Aorta (tissue), 5 donors: ENCODE measurements at regions of chr14 and their contacts with region 1.

Region 1: GRCh38 chr14:53295985-53296582 is 143.0 kb upstream of the DDHD1 start:
- DNase-seq: no peak
- ATAC-seq: no peak
- H3K4me3 ChIP-seq: no peak overlapping the region
- H3K27ac ChIP-seq: no peak overlapping the region
- H3K4me1 ChIP-seq: no peaks in the 10 kb centered on the region
- H3K27me3 ChIP-seq: no peaks in the 10 kb centered on the region

Region 2: GRCh38 chr14:52977798-52978197 is 318.3 kb before region 1 on chr14:
- intact Hi-C with region 1: loop called in 1 of 2 experiments (anchors 10 kb)
- DNase-seq: no peak
- ATAC-seq: no peak
- H3K4me3 ChIP-seq: no peak overlapping the region
- H3K27ac ChIP-seq: no peak overlapping the region
- H3K4me1 ChIP-seq: no peaks in the 10 kb centered on the region
- H3K27me3 ChIP-seq: no peaks in the 10 kb centered on the region

Region 3: GRCh38 chr14:53265025-53265424 is 31.1 kb before region 1 on chr14:
- intact Hi-C with region 1: no loop called
- DNase-seq: no peak
- ATAC-seq: no peak
- H3K4me3 ChIP-seq: no peak overlapping the region
- H3K27ac ChIP-seq: no peak overlapping the region
- H3K4me1 ChIP-seq: no peaks in the 10 kb centered on the region
- H3K27me3 ChIP-seq: no peaks in the 10 kb centered on the region

Region 4: GRCh38 chr14:53278930-53279506 is 17.1 kb before region 1 on chr14:
- intact Hi-C with region 1: no loop called
- DNase-seq: no peak
- ATAC-seq: no peak
- H3K4me3 ChIP-seq: no peak overlapping the region
- H3K27ac ChIP-seq: no peak overlapping the region
- H3K4me1 ChIP-seq: no peaks in the 10 kb centered on the region
- H3K27me3 ChIP-seq: no peaks in the 10 kb centered on the region

Region 5: GRCh38 chr14:53316499-53316898 is 20.4 kb after region 1 on chr14:
- intact Hi-C with region 1: no loop called
- DNase-seq: no peak
- ATAC-seq: peak; percentile 57
- H3K4me3 ChIP-seq: no peak overlapping the region
- H3K27ac ChIP-seq: no peak overlapping the region
- H3K4me1 ChIP-seq: no peaks in the 10 kb centered on the region
- H3K27me3 ChIP-seq: no peaks in the 10 kb centered on the region

Region 6: GRCh38 chr14:53391151-53391550 is 95.1 kb after region 1 on chr14:
- intact Hi-C with region 1: no loop called
- DNase-seq: no peak
- ATAC-seq: no peak
- H3K4me3 ChIP-seq: no peak overlapping the region
- H3K27ac ChIP-seq: no peak overlapping the region
- H3K4me1 ChIP-seq: no peaks in the 10 kb centered on the region
- H3K27me3 ChIP-seq: no peaks in the 10 kb centered on the region

Region 7: DNA sequence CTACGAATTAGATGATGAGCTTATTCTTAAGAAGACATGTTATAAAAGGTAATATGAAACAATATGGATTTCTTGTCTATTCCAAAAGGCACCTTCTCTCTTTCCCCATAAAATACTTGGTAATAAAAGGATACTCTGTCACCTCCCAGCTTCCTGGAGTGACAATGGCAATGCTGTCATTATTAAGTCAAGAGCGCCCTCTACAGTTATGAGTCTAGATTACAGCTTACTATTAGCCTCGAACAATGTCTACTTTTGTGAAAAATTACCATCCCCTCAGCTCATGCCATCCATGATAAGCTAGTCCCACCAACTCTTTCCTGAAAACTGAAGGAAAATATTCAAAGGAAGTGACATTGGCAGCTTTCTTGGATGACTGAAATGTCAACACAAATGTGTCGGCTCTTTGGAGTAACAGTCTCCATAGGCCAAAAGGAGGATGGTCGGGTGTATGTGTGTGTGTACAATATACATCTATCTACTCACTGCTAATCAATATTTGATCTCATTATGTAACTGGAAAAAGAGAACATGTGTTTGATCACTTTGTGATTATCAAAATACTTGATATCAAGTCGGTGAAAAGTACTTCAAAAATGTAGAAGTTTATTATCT is 1052.0 kb after region 1 on chr14:
- intact Hi-C with region 1: loop called (anchors 2 to 5 kb)
- DNase-seq: no peak
- ATAC-seq: peak; percentile 75
- H3K4me3 ChIP-seq: no peak overlapping the region
- H3K27ac ChIP-seq: no peak overlapping the region
- H3K4me1 ChIP-seq: peaks cover 0 to 6% of the 10 kb centered on the region in 2 donors
- H3K27me3 ChIP-seq: no peaks in the 10 kb centered on the region